Ascending aorta (tissue), 2 donors: ENCODE measurements at regions of chr15 and their contacts with region 1.

Region 1: GRCh38 chr15:42650208-42651066 is 75.0 kb downstream of the STARD9 start:
- DNase-seq: peak in 1 of 2 donors; percentile 74
- H3K4me3 ChIP-seq: no peak overlapping the region
- H3K27ac ChIP-seq: no peak overlapping the region
- H3K4me1 ChIP-seq: no peaks in the 10 kb centered on the region
- H3K27me3 ChIP-seq: no peaks in the 10 kb centered on the region
- CTCF ChIP-seq: peak; percentile 50 to 80 (median 60)

Region 2: DNA sequence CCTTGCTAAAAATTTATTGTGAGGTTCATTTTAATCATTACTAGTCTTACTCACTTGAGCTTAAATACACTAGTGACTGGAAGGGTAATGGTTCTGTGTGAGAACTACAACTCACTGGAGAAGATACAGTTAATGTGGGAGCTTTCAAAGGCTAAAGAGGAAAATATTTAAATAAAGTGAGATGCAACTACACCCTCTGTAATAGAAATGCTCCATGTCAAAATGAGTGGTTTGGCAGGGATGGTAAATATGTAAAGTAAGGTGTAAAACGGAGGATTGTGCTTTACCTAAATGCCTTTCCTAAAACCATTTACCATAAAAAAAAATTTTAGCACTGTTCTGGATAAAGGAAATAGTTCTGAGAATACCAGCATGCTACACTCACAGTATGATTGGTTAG is 117.2 kb before region 1 on chr15:
- intact Hi-C with region 1: no loop called
- DNase-seq: no peak
- H3K4me3 ChIP-seq: no peak overlapping the region
- H3K27ac ChIP-seq: no peak overlapping the region
- H3K4me1 ChIP-seq: no peaks in the 10 kb centered on the region
- H3K27me3 ChIP-seq: no peaks in the 10 kb centered on the region
- CTCF ChIP-seq: no peak

Region 3: GRCh38 chr15:42575188-42576039 is 75.0 kb before region 1 on chr15 and contains the start of gene STARD9:
- intact Hi-C with region 1: loop called (anchors 5 kb)
- DNase-seq: peak; percentile 97 to 99
- H3K4me3 ChIP-seq: peak within 1 kb of the TSS; percentile 88 to 91
- H3K27ac ChIP-seq: peak within 1 kb of the TSS; percentile 88 to 94
- H3K4me1 ChIP-seq: peaks cover 0 to 19% of the 10 kb centered on the region in 2 donors
- H3K27me3 ChIP-seq: no peaks in the 10 kb centered on the region
- CTCF ChIP-seq: no peak
- total RNA-seq, gene STARD9: 62.7 TPM